Heart left ventricle (tissue), 16 donors: ENCODE measurements at regions of chr3 and their contacts with region 1.

Region 1: GRCh38 chr3:192637803-192638202 is 89.5 kb downstream of the FGF12 start:
- DNase-seq: no peak
- ATAC-seq: peak in 3 of 4 donors; percentile 34 to 53 (median 45)
- H3K4me3 ChIP-seq: no peak overlapping the region
- H3K27ac ChIP-seq: peak overlapping the region; percentile 75 to 95 (median 87)
- H3K4me1 ChIP-seq: peaks cover 0 to 15% (median 2%) of the 10 kb centered on the region in 12 donors
- H3K27me3 ChIP-seq: no peaks in the 10 kb centered on the region
- CTCF ChIP-seq: no peak
- POLR2A ChIP-seq: no peak

Region 2: GRCh38 chr3:192577271-192577670 is 60.5 kb before region 1 on chr3:
- intact Hi-C with region 1: loop called in 3 of 10 experiments (anchors 1 to 5 kb)
- DNase-seq: no peak
- ATAC-seq: peak; percentile 61 to 88 (median 73)
- H3K4me3 ChIP-seq: no peak overlapping the region
- H3K27ac ChIP-seq: peak overlapping the region in 9 of 12 donors; percentile 7 to 60 (median 39)
- H3K4me1 ChIP-seq: peaks cover 0 to 14% (median 0%) of the 10 kb centered on the region in 12 donors
- H3K27me3 ChIP-seq: no peaks in the 10 kb centered on the region
- CTCF ChIP-seq: no peak
- POLR2A ChIP-seq: no peak

Region 3: GRCh38 chr3:192597533-192598302 is 40.1 kb before region 1 on chr3:
- intact Hi-C with region 1: no loop called
- DNase-seq: no peak
- ATAC-seq: peak; percentile 18 to 42 (median 34)
- H3K4me3 ChIP-seq: peak overlapping the region in 1 of 12 donors; percentile 1
- H3K27ac ChIP-seq: peak overlapping the region in 11 of 12 donors; percentile 5 to 56 (median 34)
- H3K4me1 ChIP-seq: peaks cover 0 to 23% (median 0%) of the 10 kb centered on the region in 12 donors
- H3K27me3 ChIP-seq: no peaks in the 10 kb centered on the region
- CTCF ChIP-seq: no peak
- POLR2A ChIP-seq: no peak

Region 4: GRCh38 chr3:192675958-192676649 is 38.3 kb after region 1 on chr3:
- intact Hi-C with region 1: loop called in 1 of 10 experiments (anchors 2 kb)
- DNase-seq: no peak
- ATAC-seq: peak in 1 of 4 donors; percentile 14
- H3K4me3 ChIP-seq: no peak overlapping the region
- H3K27ac ChIP-seq: peak overlapping the region in 1 of 12 donors; percentile 12
- H3K4me1 ChIP-seq: peaks cover 0 to 21% (median 2%) of the 10 kb centered on the region in 12 donors
- H3K27me3 ChIP-seq: no peaks in the 10 kb centered on the region
- CTCF ChIP-seq: no peak
- POLR2A ChIP-seq: no peak

Region 5: DNA sequence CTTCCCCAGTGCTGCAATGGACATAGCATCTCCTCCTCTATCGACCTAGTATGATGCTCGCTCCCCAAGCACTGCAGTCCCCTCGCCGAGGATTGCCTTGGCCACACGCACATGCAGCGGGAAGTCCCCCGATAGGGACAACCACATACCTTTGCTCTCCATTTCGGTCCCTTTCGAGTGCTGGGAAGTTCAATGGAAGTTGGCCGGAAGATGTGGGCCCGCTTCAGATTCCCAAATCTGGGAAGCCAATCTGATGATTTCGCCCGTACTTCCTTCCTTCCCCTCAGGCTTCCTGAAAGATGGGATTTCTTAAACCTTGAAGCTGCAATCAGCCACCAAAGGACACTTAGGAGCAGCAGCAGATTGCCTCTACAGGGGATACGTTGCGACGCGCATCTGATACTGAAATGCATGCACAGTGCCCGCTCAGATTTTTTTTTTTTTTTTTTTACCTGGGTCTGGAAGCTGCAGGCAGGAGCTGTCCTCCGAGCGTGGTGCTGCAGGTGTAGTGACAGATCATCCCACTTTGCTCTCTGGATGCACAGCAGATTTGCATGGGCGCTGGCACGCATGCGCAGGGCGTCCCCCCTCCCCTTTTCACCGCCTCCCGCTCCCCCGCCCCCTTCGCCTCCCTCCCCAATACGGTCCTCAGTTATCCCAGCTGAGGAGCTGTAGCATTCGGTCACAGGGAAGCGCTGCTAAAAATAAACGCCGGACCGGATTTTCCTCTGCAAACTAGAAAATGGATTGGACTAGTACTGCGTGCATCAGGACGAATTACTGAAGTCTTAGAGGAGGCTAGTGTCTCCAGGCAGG is 89.4 kb after region 1 on chr3 and contains the start of gene FGF12:
- intact Hi-C with region 1: loop called in 1 of 10 experiments (anchors 2 kb)
- DNase-seq: peak; percentile 82 to 90 (median 90)
- ATAC-seq: peak; percentile 87 to 95 (median 93)
- H3K4me3 ChIP-seq: peak within 1 kb of the TSS; percentile 19 to 70 (median 60)
- H3K27ac ChIP-seq: peak within 1 kb of the TSS; percentile 17 to 82 (median 74)
- H3K4me1 ChIP-seq: peaks cover 0 to 11% (median 1%) of the 10 kb centered on the region in 12 donors
- H3K27me3 ChIP-seq: no peaks in the 10 kb centered on the region
- CTCF ChIP-seq: no peak
- POLR2A ChIP-seq: peak in 1 of 2 donors; percentile 42
- total RNA-seq, gene FGF12: 118 to 420 (median 265) TPM